ENCODE measurements at regions of chr10 and their contacts with region 1.

Region 1: GRCh38 chr10:69087590-69088470 is at the start of gene SRGN:
- DNase-seq: peak in 4 of 5 donors; percentile 69 to 83 (median 78)
- ATAC-seq: peak; percentile 76 to 90 (median 85)
- H3K4me3 ChIP-seq: peak within 1 kb of the TSS; percentile 18 to 77 (median 54)
- H3K27ac ChIP-seq: peak within 1 kb of the TSS; percentile 77 to 97 (median 87)
- H3K4me1 ChIP-seq: peaks cover 0 to 48% (median 14%) of the 10 kb centered on the region in 12 donors
- H3K27me3 ChIP-seq: no peaks in the 10 kb centered on the region
- CTCF ChIP-seq: no peak
- POLR2A ChIP-seq: peak; percentile 57 to 78
- total RNA-seq, gene SRGN: 30.3 to 214 (median 54.7) TPM

Region 2: DNA sequence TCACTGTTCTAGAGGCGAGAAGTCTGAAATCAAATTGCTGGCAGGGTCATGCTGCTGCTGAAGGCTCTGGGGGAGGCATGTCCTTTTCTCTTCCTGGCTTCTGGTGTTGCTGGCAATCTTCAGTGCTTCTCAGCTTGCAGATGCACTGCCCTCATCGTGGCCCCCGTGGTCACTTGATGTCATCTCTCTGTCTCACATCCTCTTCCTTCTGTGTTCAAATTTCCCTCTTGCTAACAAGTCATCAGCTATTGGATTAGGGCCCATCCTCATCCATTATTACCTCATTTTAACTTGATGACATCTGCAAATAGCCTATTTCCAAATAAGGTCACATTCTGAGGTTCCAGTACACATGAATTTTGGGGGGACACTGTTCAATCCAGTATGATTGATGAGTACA is 36.5 kb before region 1 on chr10:
- intact Hi-C with region 1: loop called in 4 of 10 experiments (anchors 2 to 5 kb)
- DNase-seq: peak in 4 of 5 donors; percentile 45 to 63 (median 52)
- ATAC-seq: peak; percentile 17 to 64 (median 34)
- H3K4me3 ChIP-seq: no peak overlapping the region
- H3K27ac ChIP-seq: peak overlapping the region in 10 of 12 donors; percentile 4 to 98 (median 74)
- H3K4me1 ChIP-seq: peaks cover 0 to 93% (median 8%) of the 10 kb centered on the region in 12 donors
- H3K27me3 ChIP-seq: no peaks in the 10 kb centered on the region
- CTCF ChIP-seq: no peak
- POLR2A ChIP-seq: no peak

Region 3: DNA sequence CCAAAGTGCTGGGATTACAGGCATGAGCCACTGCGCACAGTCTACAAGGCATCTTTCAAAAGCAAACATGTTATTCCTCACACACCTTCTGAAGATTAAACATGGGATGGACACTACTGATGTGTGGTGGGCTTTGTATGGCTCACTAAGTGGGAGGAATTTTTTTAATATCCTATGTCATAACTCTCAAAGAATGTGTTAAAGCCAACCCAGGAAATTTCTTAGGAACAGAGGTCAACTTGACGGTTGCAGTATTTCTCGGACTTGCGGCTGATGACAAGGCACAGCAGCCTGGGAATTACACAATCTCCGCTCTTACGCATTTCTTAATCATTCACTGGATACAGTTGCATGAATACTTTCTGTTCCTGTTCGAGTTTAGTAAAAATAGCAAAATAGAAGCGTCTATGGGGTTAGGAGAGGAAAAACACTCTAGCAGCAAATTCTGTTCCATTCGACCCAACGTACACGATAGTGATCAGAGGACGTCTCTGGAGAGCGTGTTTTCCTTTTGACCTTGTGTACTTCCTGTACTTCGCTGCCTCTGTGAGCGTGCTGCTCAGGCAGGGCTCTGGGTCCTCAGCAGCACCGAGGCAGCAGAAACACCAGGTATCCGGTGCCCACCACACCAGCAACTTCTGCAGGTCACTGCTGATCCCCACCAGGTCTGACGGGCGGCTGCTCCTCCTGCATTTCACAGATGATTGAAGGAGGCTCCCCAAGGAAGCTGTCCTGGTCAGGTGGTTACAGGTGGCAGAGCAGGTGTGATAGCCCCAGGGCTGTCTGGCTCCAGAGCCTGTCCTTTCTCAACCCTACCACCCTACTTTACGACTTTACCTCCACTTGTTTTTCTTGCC is 26.3 kb before region 1 on chr10:
- intact Hi-C with region 1: loop called in 5 of 10 experiments (anchors 2 to 5 kb)
- DNase-seq: peak; percentile 64 to 77 (median 67)
- ATAC-seq: peak; percentile 84 to 92 (median 88)
- H3K4me3 ChIP-seq: peak overlapping the region in 9 of 12 donors; percentile 0 to 49 (median 25)
- H3K27ac ChIP-seq: peak overlapping the region; percentile 82 to 99 (median 90)
- H3K4me1 ChIP-seq: peaks cover 8 to 96% (median 38%) of the 10 kb centered on the region in 12 donors
- H3K27me3 ChIP-seq: no peaks in the 10 kb centered on the region
- CTCF ChIP-seq: no peak
- POLR2A ChIP-seq: peak in 1 of 2 donors; percentile 15

Region 4: DNA sequence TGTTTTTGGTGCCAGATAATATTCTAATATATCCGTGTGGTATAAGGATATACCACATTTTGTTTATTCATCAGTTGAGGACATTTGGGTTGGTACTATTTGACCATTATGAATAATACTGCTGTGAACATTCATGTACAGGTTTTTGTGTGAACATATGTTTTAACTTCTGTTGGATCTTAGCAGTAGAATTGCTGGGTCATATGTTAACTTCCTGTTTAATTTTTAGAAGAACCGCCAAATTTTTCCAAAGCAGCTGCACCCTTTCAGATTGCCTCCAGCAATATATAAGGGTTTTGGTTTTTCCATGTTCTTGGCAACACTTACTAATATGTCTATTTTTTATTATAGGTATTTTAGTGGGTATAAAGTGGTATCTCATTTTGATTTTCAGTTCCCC is 58.9 kb after region 1 on chr10:
- intact Hi-C with region 1: no loop called
- DNase-seq: no peak
- ATAC-seq: no peak
- H3K4me3 ChIP-seq: no peak overlapping the region
- H3K27ac ChIP-seq: no peak overlapping the region
- H3K4me1 ChIP-seq: peaks cover 0 to 13% (median 0%) of the 10 kb centered on the region in 12 donors
- H3K27me3 ChIP-seq: no peaks in the 10 kb centered on the region
- CTCF ChIP-seq: no peak
- POLR2A ChIP-seq: no peak

Measured in heart left ventricle (tissue), 16 donors.